Spleen (tissue), 13 donors: ENCODE measurements at regions of chr1 and their contacts with region 1.

Region 1: GRCh38 chr1:10867138-10867721 is 70.8 kb upstream of the CASZ1 start:
- DNase-seq: peak; percentile 85
- H3K4me3 ChIP-seq: peak overlapping the region in 7 of 8 donors; percentile 9 to 68 (median 37)
- H3K27ac ChIP-seq: no peak overlapping the region
- H3K4me1 ChIP-seq: peaks cover 7 to 20% (median 16%) of the 10 kb centered on the region in 6 donors
- H3K27me3 ChIP-seq: peaks cover 0 to 99% (median 50%) of the 10 kb centered on the region in 7 donors
- CTCF ChIP-seq: peak in 9 of 11 experiments; percentile 14 to 91 (median 77)
- POLR2A ChIP-seq: no peak

Region 2: DNA sequence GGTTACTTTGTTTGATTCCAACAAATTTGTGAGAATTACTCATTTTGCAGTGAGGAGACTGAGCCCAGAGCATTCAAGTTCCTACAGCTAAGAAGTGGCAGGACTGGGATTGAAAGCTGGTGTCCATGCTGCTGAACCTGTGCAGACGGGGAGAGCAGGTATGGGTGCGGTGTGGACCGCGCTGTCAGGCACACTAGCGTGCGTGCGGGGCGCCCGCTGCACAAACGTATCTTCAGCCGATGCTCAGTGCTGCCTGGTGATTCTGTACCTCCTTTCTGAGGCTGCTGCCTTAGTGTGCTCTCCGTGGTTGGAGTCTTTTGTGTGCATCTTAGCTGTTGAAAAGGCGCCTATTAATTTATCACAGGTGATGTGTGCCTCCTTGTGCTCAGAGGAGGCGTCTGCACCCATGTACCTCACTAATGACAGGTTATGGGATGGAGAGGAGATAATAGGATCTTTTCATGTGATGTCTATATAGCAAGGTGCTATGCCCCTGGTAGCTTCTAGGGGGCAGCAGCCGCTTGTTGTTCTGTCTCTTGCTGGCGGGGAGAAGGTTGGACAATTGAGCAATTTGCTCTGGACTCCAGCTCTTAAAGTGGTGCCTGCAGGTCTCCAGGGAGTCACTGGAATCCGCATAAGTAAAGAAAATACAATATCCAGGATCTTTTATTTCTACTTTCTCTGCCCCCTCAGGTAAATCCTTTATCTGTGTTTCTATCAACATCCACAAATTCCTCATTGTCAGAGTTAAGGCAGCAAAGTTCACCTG is 359.9 kb before region 1 on chr1:
- intact Hi-C with region 1: loop called (anchors 5 kb)
- DNase-seq: peak; percentile 82
- H3K4me3 ChIP-seq: no peak overlapping the region
- H3K27ac ChIP-seq: no peak overlapping the region
- H3K4me1 ChIP-seq: peaks cover 20 to 67% (median 39%) of the 10 kb centered on the region in 6 donors
- H3K27me3 ChIP-seq: no peaks in the 10 kb centered on the region
- CTCF ChIP-seq: peak; percentile 31 to 85 (median 72)
- POLR2A ChIP-seq: no peak

Region 3: GRCh38 chr1:10694633-10695627 is 172.3 kb before region 1 on chr1:
- intact Hi-C with region 1: loop called (anchors 10 kb)
- DNase-seq: peak; percentile 95
- H3K4me3 ChIP-seq: peak overlapping the region; percentile 34 to 95 (median 51)
- H3K27ac ChIP-seq: peak overlapping the region; percentile 65 to 94 (median 83)
- H3K4me1 ChIP-seq: peaks cover 7 to 47% (median 28%) of the 10 kb centered on the region in 6 donors
- H3K27me3 ChIP-seq: no peaks in the 10 kb centered on the region
- CTCF ChIP-seq: no peak
- POLR2A ChIP-seq: no peak